OCI-LY7 (cell line): ENCODE measurements at regions of chr16 and their contacts with region 1.

Region 1: DNA sequence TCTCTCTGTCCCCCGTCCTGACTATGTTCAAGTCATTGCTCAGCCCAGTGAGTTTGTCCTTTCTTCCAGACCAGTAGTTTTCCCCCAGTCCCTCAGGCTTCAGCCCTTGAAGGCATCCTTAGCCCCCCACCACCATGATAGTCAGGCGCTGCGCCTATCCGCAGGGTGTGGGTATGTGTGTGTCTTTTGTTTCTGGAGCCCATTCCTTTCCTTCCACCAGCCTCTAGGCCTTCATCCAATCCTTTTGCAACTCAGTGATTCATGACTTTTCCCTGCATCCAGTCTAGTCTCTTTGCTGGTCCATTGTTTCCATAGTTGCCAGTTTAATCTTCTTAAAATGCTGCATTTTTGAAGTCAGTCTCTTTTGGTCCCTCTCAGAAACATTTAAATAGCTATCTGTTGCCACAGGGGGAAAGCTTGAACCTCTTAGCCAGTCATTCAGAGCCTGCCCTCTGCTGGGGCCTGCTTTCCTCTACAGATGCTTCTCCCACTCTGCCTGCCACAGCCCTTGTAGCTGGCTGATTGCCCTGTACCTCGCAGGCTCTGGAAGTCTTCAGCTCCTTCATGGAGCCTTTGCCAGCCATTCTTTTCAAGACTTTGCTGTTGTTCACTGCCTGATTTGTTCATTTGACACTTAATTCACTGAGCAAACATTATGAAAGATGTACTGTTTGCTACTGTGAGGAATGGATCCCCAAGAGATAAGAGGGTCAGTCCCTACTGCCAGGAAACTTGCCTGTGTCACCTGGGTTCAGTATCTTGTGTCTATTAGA is 55.9 kb upstream of the ADCY7 start:
- DNase-seq: peak; percentile 77
- H3K4me3 ChIP-seq: no peak overlapping the region
- H3K27ac ChIP-seq: no peak overlapping the region
- H3K4me1 ChIP-seq: peaks cover 12% of the 10 kb centered on the region
- CTCF ChIP-seq: peak; percentile 86

Region 2: GRCh38 chr16:49663081-49664065 is 547.1 kb before region 1 on chr16:
- CTCF ChIA-PET with region 1: no interaction called
- POLR2A ChIA-PET with region 1: no interaction called
- intact Hi-C with region 1: no loop called
- DNase-seq: no peak
- H3K4me3 ChIP-seq: no peak overlapping the region
- H3K27ac ChIP-seq: no peak overlapping the region
- H3K4me1 ChIP-seq: no peaks in the 10 kb centered on the region
- CTCF ChIP-seq: no peak

Region 3: GRCh38 chr16:50065624-50066481 is 144.6 kb before region 1 on chr16 and contains the start of gene HEATR3:
- CTCF ChIA-PET with region 1: interaction called, 21 read pairs
- POLR2A ChIA-PET with region 1: interaction called, 3 read pairs
- intact Hi-C with region 1: loop called (anchors 1 kb)
- DNase-seq: peak; percentile 93
- H3K4me3 ChIP-seq: peak within 1 kb of the TSS; percentile 80
- H3K27ac ChIP-seq: peak within 1 kb of the TSS; percentile 89
- H3K4me1 ChIP-seq: peaks cover 26% of the 10 kb centered on the region
- CTCF ChIP-seq: no peak
- total RNA-seq, gene HEATR3: 36.8 and 50.6 TPM in 2 replicates

Region 4: GRCh38 chr16:50354629-50355456 is 144.4 kb after region 1 on chr16:
- CTCF ChIA-PET with region 1: no interaction called
- POLR2A ChIA-PET with region 1: no interaction called
- intact Hi-C with region 1: loop called (anchors 5 kb)
- DNase-seq: peak; percentile 56
- H3K4me3 ChIP-seq: no peak overlapping the region
- H3K27ac ChIP-seq: no peak overlapping the region
- H3K4me1 ChIP-seq: no peaks in the 10 kb centered on the region
- CTCF ChIP-seq: peak; percentile 94

Region 5: GRCh38 chr16:50509521-50510341 is 299.3 kb after region 1 on chr16:
- CTCF ChIA-PET with region 1: no interaction called
- POLR2A ChIA-PET with region 1: no interaction called
- intact Hi-C with region 1: loop called (anchors 10 kb)
- DNase-seq: peak; percentile 35
- H3K4me3 ChIP-seq: no peak overlapping the region
- H3K27ac ChIP-seq: no peak overlapping the region
- H3K4me1 ChIP-seq: no peaks in the 10 kb centered on the region
- CTCF ChIP-seq: peak; percentile 89